ENCODE measurements at regions of chr16 and their contacts with region 1.

Region 1: DNA sequence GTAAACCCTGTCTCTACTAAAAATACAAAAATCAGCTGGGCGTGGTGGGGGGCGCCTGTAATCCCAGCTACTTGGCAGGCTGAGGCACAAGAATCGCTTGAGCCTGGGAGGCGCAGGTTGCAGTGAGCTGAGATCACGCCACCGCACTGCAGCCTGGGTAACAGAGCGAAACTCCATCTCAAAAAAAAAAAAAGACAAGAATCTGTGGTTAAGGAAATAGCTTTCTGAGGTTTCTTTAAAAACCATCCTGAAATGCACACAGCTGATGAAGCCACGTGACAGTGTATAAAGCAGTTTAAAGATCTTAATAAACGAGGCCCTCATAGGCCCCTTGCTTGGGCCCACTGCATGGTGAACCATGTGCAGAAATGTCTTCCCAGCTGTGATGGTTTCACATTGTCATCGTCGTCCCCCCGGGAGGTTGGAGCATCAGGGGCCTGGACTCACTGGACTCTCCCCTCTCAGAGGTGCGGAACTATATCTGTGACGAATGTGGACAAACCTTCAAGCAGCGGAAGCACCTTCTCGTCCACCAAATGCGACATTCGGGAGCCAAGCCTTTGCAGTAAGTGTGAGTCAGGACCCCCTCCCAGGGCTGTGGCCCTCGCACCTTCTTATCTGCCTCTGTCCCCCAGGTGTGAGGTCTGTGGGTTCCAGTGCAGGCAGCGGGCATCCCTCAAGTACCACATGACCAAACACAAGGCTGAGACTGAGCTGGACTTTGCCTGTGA is 16.2 kb downstream of the ZNF276 start:
- DNase-seq: no peak
- ATAC-seq: no peak
- H3K4me3 ChIP-seq: no peak overlapping the region
- H3K27ac ChIP-seq: peak overlapping the region; percentile 19; the same call in 1 of the 2 replicates
- H3K4me1 ChIP-seq: no peaks in the 10 kb centered on the region
- H3K27me3 ChIP-seq: no peaks in the 10 kb centered on the region
- CTCF ChIP-seq: no peak
- POLR2A ChIP-seq: no peak
- RAD21 ChIP-seq: no peak

Region 2: DNA sequence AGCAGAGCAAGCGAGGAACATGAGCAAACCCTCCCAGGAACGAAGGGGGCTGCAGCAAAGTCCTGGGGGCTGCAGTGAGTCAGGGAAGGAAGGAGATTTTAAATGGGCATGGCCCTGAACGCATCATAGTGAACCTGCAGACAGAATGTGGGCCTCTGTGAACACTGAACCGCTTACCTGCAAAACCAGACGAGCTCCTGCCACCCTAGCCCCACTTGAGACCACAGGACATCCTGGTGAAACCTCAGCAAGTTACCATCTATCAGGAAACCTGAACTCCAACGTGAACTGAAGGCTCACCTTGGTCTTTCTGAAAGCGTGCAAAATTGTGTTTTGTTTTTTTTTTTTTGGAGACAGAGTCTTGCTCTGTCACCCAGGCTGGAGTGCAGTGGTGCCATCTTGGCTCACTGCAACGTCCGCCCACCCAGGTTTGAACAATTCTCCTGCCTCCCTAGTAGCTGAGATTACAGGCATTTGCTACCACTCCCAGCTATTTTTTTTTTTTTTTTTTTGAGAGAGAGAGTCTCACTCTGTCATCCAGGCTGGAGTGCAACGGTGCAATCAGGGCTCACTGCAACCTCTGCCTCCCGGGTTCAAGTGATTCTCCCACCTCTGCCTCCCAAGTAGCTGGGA is 48.1 kb after region 1 on chr16:
- CTCF ChIA-PET with region 1: no interaction called
- POLR2A ChIA-PET with region 1: no interaction called
- RAD21 ChIA-PET with region 1: no interaction called
- intact Hi-C with region 1: loop called (anchors 5 kb)
- DNase-seq: no peak
- ATAC-seq: no peak
- H3K4me3 ChIP-seq: no peak overlapping the region
- H3K27ac ChIP-seq: no peak overlapping the region
- H3K4me1 ChIP-seq: no peaks in the 10 kb centered on the region
- H3K27me3 ChIP-seq: no peaks in the 10 kb centered on the region
- CTCF ChIP-seq: no peak
- POLR2A ChIP-seq: no peak
- RAD21 ChIP-seq: no peak

Measured in HCT116 (cell line).